ENCODE measurements at regions of chr16 and their contacts with region 1.

Region 1: DNA sequence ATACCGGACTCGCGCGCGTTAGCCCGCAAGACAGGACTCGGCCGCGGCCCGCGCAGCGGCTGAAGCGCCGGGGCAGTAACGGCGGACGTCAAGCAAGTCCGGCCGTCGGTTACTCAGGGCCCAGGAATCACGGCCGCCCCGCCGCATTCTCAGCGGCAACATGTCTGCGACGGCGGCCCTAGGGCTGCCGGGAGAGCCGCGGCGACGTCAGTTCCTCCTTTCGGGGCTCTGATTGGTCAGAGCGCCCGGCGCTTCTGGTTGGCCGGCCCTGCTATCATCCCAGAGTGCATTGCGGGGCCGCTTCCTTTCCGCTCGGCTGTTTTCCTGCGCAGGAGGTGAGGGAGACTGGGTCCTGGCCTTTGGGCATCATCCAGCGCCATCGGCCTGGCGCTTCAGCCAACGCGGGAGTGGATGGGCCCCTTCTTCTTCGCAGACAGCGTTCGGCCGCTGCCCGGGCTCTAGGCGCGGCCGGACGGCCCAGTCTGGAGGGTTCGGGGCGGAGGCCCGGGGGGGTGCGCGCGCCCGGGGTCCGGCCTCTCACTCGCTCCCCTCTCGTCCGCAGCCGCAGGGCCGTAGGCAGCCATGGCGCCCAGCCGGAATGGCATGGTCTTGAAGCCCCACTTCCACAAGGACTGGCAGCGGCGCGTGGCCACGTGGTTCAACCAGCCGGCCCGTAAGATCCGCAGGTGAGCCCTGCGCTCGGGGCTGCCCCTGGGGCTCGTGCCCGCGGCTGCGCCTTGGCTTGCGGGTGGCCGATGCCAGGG is at the start of gene RPL13:
- DNase-seq: peak; percentile 79 to 95 (median 92)
- ATAC-seq: peak; percentile 96
- H3K4me3 ChIP-seq: peak within 1 kb of the TSS; percentile 97
- H3K4me3 Mint-ChIP-seq: peak within 1 kb of the TSS; percentile 85 to 99 (median 96)
- H3K27ac ChIP-seq: peak within 1 kb of the TSS; percentile 87
- H3K27ac Mint-ChIP-seq: peak within 1 kb of the TSS; percentile 92 to 99 (median 98)
- H3K4me1 ChIP-seq: peaks cover 24 to 42% of the 10 kb centered on the region in 2 donors
- H3K4me1 Mint-ChIP-seq: peaks cover 33 to 63% (median 55%) of the 10 kb centered on the region in 7 donors
- H3K27me3 ChIP-seq: no peaks in the 10 kb centered on the region
- H3K27me3 Mint-ChIP-seq: no peaks in the 10 kb centered on the region
- total RNA-seq, gene RPL13: 2,239 to 5,631 (median 5,332) TPM

Region 2: GRCh38 chr16:89171463-89172170 is 388.9 kb before region 1 on chr16 and contains the start of gene CDH15:
- CTCF ChIA-PET with region 1: no interaction called
- POLR2A ChIA-PET with region 1: no interaction called
- intact Hi-C with region 1: loop called in 1 of 2 experiments (anchors 5 kb)
- DNase-seq: peak; percentile 79 to 96 (median 91)
- ATAC-seq: peak; percentile 97
- H3K4me3 ChIP-seq: peak within 1 kb of the TSS; percentile 51
- H3K4me3 Mint-ChIP-seq: peak within 1 kb of the TSS; percentile 65 to 88 (median 76)
- H3K27ac ChIP-seq: no peak within 1 kb of the TSS
- H3K27ac Mint-ChIP-seq: peak within 1 kb of the TSS in 5 of 9 donors; percentile 51 to 86 (median 75)
- H3K4me1 ChIP-seq: peaks cover 8 to 21% of the 10 kb centered on the region in 2 donors
- H3K4me1 Mint-ChIP-seq: peaks cover 6 to 10% (median 7%) of the 10 kb centered on the region in 7 donors
- H3K27me3 ChIP-seq: no peaks in the 10 kb centered on the region
- H3K27me3 Mint-ChIP-seq: peaks cover 0 to 6% (median 0%) of the 10 kb centered on the region in 5 donors
- total RNA-seq, gene CDH15: not detected

Region 3: DNA sequence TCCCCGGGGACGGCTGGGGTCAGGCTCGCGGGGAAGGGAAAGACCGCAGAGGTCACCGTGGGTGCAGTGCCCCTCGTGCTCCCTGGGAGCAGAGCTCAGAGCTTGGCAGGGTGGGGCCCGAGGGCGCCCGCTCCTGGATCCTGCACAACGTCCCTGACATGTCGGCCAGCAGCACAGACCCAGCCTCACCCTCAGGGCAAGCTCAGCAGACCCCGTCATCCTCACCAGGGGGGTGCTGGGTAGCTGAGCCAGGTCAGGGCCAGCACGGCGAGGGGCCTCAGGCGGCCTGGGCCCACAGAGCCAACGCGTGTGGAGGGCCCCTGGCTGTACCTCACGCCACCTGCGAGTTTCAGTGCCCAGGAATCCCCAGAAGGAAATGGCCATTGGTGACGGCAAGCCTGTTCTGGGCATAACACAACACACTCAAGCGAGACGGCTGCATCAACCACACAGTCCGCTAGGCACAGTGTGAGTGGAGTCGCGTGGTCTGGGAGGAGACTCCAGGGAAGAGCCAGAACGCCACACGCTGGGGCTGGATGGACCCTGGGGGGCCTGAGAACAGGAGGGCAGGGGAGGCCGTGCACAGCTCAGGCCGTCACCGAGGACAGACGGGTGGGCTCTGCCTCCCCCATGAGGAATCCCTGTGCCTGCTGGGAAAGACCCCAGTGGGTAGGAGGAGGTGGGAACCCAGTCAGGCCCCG is 282.8 kb before region 1 on chr16:
- CTCF ChIA-PET with region 1: no interaction called
- POLR2A ChIA-PET with region 1: no interaction called
- intact Hi-C with region 1: no loop called
- DNase-seq: no peak
- ATAC-seq: no peak
- H3K4me3 ChIP-seq: no peak overlapping the region
- H3K4me3 Mint-ChIP-seq: no peak overlapping the region
- H3K27ac ChIP-seq: no peak overlapping the region
- H3K27ac Mint-ChIP-seq: peak overlapping the region in 1 of 9 donors; percentile 16
- H3K4me1 ChIP-seq: no peaks in the 10 kb centered on the region
- H3K4me1 Mint-ChIP-seq: peaks cover 0 to 13% (median 0%) of the 10 kb centered on the region in 7 donors
- H3K27me3 ChIP-seq: no peaks in the 10 kb centered on the region
- H3K27me3 Mint-ChIP-seq: no peaks in the 10 kb centered on the region

Region 4: DNA sequence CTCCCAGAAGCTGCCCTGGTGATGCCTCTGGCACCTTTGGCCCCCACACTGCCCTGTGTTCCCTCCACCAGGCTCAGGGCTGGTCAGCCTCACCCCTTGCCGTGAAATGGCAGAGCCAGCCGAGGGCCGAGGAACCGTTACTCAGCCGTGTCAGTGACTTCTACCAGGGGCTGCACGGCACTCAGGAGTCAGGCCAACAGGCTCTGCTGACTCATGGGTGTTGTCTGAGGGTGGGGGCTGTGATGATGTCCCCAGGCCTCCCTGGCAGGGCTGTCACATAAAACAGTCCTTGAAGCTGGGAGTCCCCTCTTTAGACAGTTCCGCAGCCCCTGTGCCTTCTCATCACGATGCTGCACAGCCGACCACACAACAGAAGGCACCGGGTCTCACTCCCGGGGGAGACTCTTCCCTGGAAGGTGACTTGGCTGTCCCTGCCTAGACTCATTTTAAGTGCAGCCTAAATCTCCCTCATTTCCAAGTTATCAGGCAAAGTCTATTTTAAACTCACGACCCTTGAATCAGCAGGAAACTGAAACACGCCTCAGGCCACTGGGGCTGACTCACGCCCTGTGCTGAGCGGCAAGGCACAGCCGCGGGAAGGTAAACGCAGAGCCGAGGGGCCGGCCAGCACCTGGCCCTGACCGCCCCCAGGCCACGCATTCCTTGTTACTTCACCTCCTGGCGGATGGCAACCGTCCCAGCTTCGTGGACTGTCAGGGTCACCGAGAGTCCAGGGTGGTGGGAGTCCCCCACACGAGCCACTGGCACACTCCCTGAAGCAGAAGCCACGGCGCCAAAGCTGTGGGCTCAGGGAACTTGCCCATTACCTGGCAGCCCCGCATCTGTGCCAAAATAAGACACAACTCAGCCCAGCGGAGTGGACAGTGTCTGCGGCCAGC is 240.4 kb before region 1 on chr16:
- CTCF ChIA-PET with region 1: interaction called, 3 read pairs
- POLR2A ChIA-PET with region 1: interaction called, 7 read pairs
- intact Hi-C with region 1: loop called in 1 of 2 experiments (anchors 5 kb)
- DNase-seq: peak in 1 of 9 donors; percentile 59
- ATAC-seq: no peak
- H3K4me3 ChIP-seq: no peak overlapping the region
- H3K4me3 Mint-ChIP-seq: peak overlapping the region in 9 of 10 donors; percentile 36 to 78 (median 48)
- H3K27ac ChIP-seq: no peak overlapping the region
- H3K27ac Mint-ChIP-seq: peak overlapping the region in 7 of 9 donors; percentile 21 to 82 (median 54)
- H3K4me1 ChIP-seq: peaks cover 81 to 94% of the 10 kb centered on the region in 2 donors
- H3K4me1 Mint-ChIP-seq: peaks cover 80 to 97% (median 93%) of the 10 kb centered on the region in 7 donors
- H3K27me3 ChIP-seq: no peaks in the 10 kb centered on the region
- H3K27me3 Mint-ChIP-seq: no peaks in the 10 kb centered on the region

Region 5: DNA sequence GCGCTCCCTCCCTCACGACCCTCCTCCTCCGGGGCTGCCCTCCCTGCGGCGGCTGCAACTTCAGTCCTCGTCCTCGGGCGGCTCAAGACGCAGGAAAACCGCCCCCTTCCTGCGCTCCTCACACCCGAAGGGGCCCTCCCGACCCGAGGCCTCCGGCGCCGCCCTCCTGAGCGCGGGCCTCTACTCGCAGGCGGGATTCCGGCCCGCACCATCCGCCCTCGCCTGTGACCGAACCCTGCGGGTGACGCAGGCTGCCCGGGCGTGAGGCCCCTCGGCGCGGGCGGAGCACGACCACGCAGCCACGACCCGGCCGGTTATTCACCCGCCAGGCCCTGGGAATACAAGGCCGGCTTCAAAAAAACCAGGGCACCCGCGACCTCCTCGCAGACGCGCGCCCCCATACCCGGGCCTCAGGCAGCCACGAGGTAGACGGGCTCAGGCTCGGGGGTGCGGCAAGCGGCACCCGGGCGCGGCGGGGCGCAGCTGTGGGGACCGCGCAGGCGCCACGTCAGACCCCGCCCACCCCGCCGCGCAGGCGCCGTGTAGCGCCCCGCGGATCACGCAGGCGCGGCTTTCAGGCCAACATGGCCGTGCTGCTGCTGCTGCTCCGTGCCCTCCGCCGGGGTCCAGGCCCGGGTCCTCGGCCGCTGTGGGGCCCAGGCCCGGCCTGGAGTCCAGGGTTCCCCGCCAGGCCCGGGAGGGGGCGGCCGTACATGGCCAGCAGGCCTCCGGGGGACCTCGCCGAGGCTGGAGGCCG is 52.5 kb before region 1 on chr16 and contains the start of gene SPG7:
- CTCF ChIA-PET with region 1: no interaction called
- POLR2A ChIA-PET with region 1: interaction called, 12 read pairs
- intact Hi-C with region 1: loop called (anchors 1 kb)
- DNase-seq: peak; percentile 82 to 98 (median 95)
- ATAC-seq: peak; percentile 83
- H3K4me3 ChIP-seq: peak within 1 kb of the TSS; percentile 64
- H3K4me3 Mint-ChIP-seq: peak within 1 kb of the TSS; percentile 82 to 96 (median 95)
- H3K27ac ChIP-seq: peak within 1 kb of the TSS; percentile 86
- H3K27ac Mint-ChIP-seq: peak within 1 kb of the TSS; percentile 87 to 97 (median 94)
- H3K4me1 ChIP-seq: peaks cover 30 to 33% of the 10 kb centered on the region in 2 donors
- H3K4me1 Mint-ChIP-seq: peaks cover 14 to 46% (median 31%) of the 10 kb centered on the region in 7 donors
- H3K27me3 ChIP-seq: no peaks in the 10 kb centered on the region
- H3K27me3 Mint-ChIP-seq: no peaks in the 10 kb centered on the region
- total RNA-seq, gene SPG7: 129 to 181 (median 170) TPM

Region 6: GRCh38 chr16:89602273-89602951 is 41.9 kb after region 1 on chr16:
- CTCF ChIA-PET with region 1: no interaction called
- POLR2A ChIA-PET with region 1: no interaction called
- intact Hi-C with region 1: no loop called
- DNase-seq: peak in 6 of 9 donors; percentile 19 to 71 (median 33)
- ATAC-seq: peak; percentile 81
- H3K4me3 ChIP-seq: no peak overlapping the region
- H3K4me3 Mint-ChIP-seq: peak overlapping the region in 8 of 10 donors; percentile 20 to 72 (median 44)
- H3K27ac ChIP-seq: no peak overlapping the region
- H3K27ac Mint-ChIP-seq: peak overlapping the region in 2 of 9 donors; percentile 3 to 74
- H3K4me1 ChIP-seq: peaks cover 12 to 13% of the 10 kb centered on the region in 2 donors
- H3K4me1 Mint-ChIP-seq: peaks cover 0 to 12% (median 8%) of the 10 kb centered on the region in 7 donors
- H3K27me3 ChIP-seq: no peaks in the 10 kb centered on the region
- H3K27me3 Mint-ChIP-seq: no peaks in the 10 kb centered on the region

Region 7: GRCh38 chr16:89641458-89642119 is 81.0 kb after region 1 on chr16:
- CTCF ChIA-PET with region 1: no interaction called
- POLR2A ChIA-PET with region 1: no interaction called
- intact Hi-C with region 1: loop called in 1 of 2 experiments (anchors 5 kb)
- DNase-seq: no peak
- ATAC-seq: no peak
- H3K4me3 ChIP-seq: no peak overlapping the region
- H3K4me3 Mint-ChIP-seq: peak overlapping the region in 8 of 10 donors; percentile 48 to 85 (median 74)
- H3K27ac ChIP-seq: no peak overlapping the region
- H3K27ac Mint-ChIP-seq: peak overlapping the region in 1 of 9 donors; percentile 78
- H3K4me1 ChIP-seq: no peaks in the 10 kb centered on the region
- H3K4me1 Mint-ChIP-seq: peaks cover 0 to 10% (median 7%) of the 10 kb centered on the region in 7 donors
- H3K27me3 ChIP-seq: no peaks in the 10 kb centered on the region
- H3K27me3 Mint-ChIP-seq: no peaks in the 10 kb centered on the region

Region 8: DNA sequence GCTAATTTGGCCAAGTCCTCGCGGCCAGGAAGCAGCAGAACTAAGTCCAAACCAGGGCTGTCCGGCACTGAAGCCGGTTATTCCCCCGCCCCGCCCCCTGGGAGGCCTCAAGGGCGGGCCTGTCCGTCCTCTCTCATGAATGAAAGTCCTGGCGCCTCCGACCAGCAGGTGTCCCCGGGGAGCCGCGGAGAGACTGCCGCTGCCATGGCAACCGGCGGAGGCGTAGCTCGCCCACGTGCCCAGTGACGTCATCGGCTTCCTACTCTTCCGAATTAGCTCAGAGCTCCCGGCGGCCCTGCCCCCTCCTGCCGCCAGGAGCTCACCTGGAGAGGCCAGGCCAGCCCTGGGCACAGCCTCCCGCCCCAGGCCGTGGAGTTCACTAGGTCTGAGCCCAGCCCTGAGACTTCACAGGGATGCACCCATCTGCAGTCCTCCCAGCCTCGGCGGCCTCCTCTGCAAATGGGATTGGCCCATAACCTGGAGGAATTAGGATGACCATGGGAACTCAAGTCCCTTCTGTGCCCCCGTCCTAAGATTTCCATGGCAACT is 139.6 kb after region 1 on chr16:
- CTCF ChIA-PET with region 1: interaction called, 4 read pairs
- POLR2A ChIA-PET with region 1: no interaction called
- intact Hi-C with region 1: loop called in 1 of 2 experiments (anchors 1 kb)
- DNase-seq: peak; percentile 88 to 99 (median 92)
- ATAC-seq: peak; percentile 52
- H3K4me3 ChIP-seq: peak overlapping the region; percentile 41
- H3K4me3 Mint-ChIP-seq: peak overlapping the region; percentile 52 to 84 (median 74)
- H3K27ac ChIP-seq: peak overlapping the region; percentile 73
- H3K27ac Mint-ChIP-seq: peak overlapping the region in 8 of 9 donors; percentile 46 to 89 (median 80)
- H3K4me1 ChIP-seq: peaks cover 27 to 28% of the 10 kb centered on the region in 2 donors
- H3K4me1 Mint-ChIP-seq: peaks cover 0 to 34% (median 17%) of the 10 kb centered on the region in 7 donors
- H3K27me3 ChIP-seq: no peaks in the 10 kb centered on the region
- H3K27me3 Mint-ChIP-seq: no peaks in the 10 kb centered on the region